ENCODE measurements at regions of chr9 and their contacts with region 1.

Region 1: DNA sequence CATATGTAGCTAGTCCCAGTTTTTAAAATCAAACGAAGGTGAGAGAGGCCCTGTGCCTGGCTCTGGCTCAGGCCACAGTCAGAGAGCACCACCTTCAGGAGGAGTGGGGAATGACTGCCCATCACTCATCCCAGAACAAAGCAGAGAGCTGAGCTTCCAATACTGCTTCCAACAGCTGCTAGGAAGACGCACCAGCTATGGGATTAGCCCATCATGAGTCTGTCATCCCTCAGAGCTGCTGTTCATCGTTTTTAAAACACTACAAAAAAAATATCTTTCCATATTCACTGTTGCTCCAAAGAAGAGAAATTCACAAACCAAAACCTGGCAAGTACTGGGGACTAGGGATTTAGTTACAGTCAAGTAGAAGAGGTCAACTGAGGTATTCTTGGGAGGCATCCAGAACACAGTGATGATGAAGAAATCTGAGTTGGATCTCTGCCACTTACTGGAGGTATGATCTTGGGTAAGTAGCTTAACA is 102.4 kb downstream of the CDK5RAP2 start:
- DNase-seq: peak; percentile 90
- ATAC-seq: peak; percentile 96
- H3K4me3 ChIP-seq: no peak overlapping the region
- H3K27ac ChIP-seq: no peak overlapping the region; the same call in 1 of the 2 replicates
- H3K4me1 ChIP-seq: peaks cover 9% of the 10 kb centered on the region
- H3K27me3 ChIP-seq: no peaks in the 10 kb centered on the region
- CTCF ChIP-seq: peak; percentile 99
- POLR2A ChIP-seq: 0 out of 2 replicates have a peak, but pooled peaks have one; percentile 28
- RAD21 ChIP-seq: peak; percentile 99

Region 2: GRCh38 chr9:119556129-119556875 is 921.3 kb before region 1 on chr9:
- CTCF ChIA-PET with region 1: interaction called, 15 read pairs
- POLR2A ChIA-PET with region 1: no interaction called
- dilution Hi-C with region 1: no loop called
- in situ Hi-C with region 1: loop called (anchors 10 kb)
- intact Hi-C with region 1: loop called (anchors 1 kb)
- DNase-seq: peak; percentile 18
- ATAC-seq: peak; percentile 93
- H3K4me3 ChIP-seq: peak overlapping the region; percentile 40
- H3K27ac ChIP-seq: no peak overlapping the region
- H3K4me1 ChIP-seq: no peaks in the 10 kb centered on the region
- H3K27me3 ChIP-seq: no peaks in the 10 kb centered on the region
- CTCF ChIP-seq: peak; percentile 86
- POLR2A ChIP-seq: no peak
- RAD21 ChIP-seq: peak; percentile 77

Region 3: DNA sequence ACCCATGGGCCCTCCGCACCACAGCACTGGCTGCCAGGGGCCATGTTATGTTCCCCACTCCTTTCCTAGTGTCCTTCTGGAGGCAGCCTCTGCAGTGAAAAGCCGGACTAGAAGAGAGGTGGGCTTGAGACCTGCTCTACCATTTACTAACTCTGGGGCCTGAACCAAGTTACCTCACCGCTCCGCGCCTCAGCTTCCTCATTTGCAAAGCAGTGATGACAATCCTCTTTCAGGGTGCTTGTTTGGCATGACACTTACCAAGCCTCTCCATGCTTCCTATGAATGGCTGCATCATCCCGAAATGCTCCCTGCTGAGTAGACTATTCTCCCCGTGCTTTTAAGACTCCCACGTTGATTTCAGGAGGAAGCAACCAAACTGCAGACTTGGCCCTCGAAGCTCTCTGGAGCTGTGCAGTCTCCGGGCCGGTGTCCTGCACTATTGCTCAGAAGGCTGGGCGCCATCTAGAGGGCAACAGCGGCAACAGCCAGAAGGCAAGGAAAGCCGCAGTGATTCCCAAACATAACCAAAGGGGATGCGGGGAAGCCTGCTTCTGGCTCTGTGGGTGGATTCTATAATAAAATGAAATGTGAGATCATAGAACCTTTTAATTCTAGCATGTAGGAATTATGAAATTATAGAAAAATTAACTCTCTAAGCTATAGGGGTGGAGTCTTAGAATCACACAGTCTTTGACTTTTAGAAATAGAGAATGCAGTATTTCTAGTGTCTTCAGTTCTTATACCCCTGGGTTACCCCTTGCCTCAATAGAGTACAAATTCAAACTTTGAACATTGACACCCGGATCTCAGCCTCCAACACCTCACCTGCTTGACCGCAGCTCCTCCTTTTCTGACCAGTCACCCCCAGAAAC is 508.5 kb before region 1 on chr9:
- CTCF ChIA-PET with region 1: interaction called, 16 read pairs
- POLR2A ChIA-PET with region 1: no interaction called
- dilution Hi-C with region 1: no loop called
- in situ Hi-C with region 1: loop called (anchors 10 kb)
- intact Hi-C with region 1: loop called (anchors 1 kb)
- DNase-seq: peak; percentile 61
- ATAC-seq: peak; percentile 99
- H3K4me3 ChIP-seq: no peak overlapping the region
- H3K27ac ChIP-seq: no peak overlapping the region
- H3K4me1 ChIP-seq: peaks cover 2% of the 10 kb centered on the region
- H3K27me3 ChIP-seq: no peaks in the 10 kb centered on the region
- CTCF ChIP-seq: peak; percentile 94
- POLR2A ChIP-seq: no peak
- RAD21 ChIP-seq: peak; percentile 87

Region 4: DNA sequence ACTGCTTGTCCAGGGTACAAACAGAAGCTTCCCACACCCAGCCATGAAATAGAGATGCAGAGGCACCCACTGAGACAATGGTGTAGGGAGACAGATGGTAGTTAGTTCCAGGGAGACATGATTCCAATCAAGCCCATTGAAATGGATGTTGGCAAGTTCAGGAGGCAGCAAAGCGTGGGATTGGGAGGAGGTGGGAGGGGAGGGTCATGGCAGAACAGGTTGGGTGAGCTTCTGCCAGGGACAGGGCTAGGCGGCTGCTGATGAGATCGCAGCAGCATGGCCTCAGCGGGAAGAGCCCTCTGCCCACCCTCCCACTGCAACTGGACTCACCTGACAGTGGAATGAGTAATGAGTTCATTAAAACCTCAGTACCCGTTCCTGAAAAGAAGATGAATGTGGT is 315.8 kb before region 1 on chr9:
- CTCF ChIA-PET with region 1: no interaction called
- POLR2A ChIA-PET with region 1: no interaction called
- dilution Hi-C with region 1: no loop called
- in situ Hi-C with region 1: no loop called
- intact Hi-C with region 1: no loop called
- DNase-seq: no peak
- ATAC-seq: no peak
- H3K4me3 ChIP-seq: no peak overlapping the region
- H3K27ac ChIP-seq: no peak overlapping the region
- H3K4me1 ChIP-seq: no peaks in the 10 kb centered on the region
- H3K27me3 ChIP-seq: no peaks in the 10 kb centered on the region
- CTCF ChIP-seq: no peak
- POLR2A ChIP-seq: no peak
- RAD21 ChIP-seq: no peak

Region 5: GRCh38 chr9:120343416-120343815 is 134.1 kb before region 1 on chr9:
- CTCF ChIA-PET with region 1: no interaction called
- POLR2A ChIA-PET with region 1: no interaction called
- dilution Hi-C with region 1: no loop called
- in situ Hi-C with region 1: no loop called
- intact Hi-C with region 1: no loop called
- DNase-seq: no peak
- ATAC-seq: no peak
- H3K4me3 ChIP-seq: no peak overlapping the region
- H3K27ac ChIP-seq: no peak overlapping the region
- H3K4me1 ChIP-seq: no peaks in the 10 kb centered on the region
- H3K27me3 ChIP-seq: peaks cover 2% of the 10 kb centered on the region; the same call in 1 of the 2 replicates
- CTCF ChIP-seq: no peak
- POLR2A ChIP-seq: no peak
- RAD21 ChIP-seq: no peak

Region 6: GRCh38 chr9:120377268-120378159 is 100.0 kb before region 1 on chr9:
- CTCF ChIA-PET with region 1: interaction called, 13 read pairs
- POLR2A ChIA-PET with region 1: no interaction called
- dilution Hi-C with region 1: no loop called
- in situ Hi-C with region 1: no loop called
- intact Hi-C with region 1: no loop called
- DNase-seq: peak; percentile 88
- ATAC-seq: peak; percentile 85
- H3K4me3 ChIP-seq: no peak overlapping the region
- H3K27ac ChIP-seq: no peak overlapping the region
- H3K4me1 ChIP-seq: peaks cover 10% of the 10 kb centered on the region
- H3K27me3 ChIP-seq: no peaks in the 10 kb centered on the region
- CTCF ChIP-seq: no peak
- POLR2A ChIP-seq: no peak
- RAD21 ChIP-seq: no peak

Region 7: DNA sequence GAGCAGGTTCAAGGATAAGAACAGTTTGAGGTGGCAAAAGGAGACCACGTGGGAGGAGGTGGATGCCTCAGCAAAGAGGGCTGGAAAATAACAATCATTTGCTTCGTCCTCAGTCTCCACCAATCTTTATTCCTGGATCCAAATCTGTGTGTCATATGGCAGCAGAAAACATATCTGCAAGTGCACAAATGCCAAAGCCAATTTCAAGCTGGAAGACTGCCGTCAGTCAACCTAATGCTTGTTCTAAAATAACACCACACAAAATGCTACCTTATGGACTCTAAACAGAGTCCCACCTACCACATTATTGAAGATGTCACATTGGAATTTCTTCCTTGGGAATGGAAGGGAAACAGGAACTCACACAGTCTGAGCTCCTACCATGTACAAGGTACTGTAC is 26.6 kb before region 1 on chr9:
- CTCF ChIA-PET with region 1: no interaction called
- POLR2A ChIA-PET with region 1: no interaction called
- dilution Hi-C with region 1: no loop called
- in situ Hi-C with region 1: no loop called
- intact Hi-C with region 1: no loop called
- DNase-seq: no peak
- ATAC-seq: no peak
- H3K4me3 ChIP-seq: no peak overlapping the region
- H3K27ac ChIP-seq: no peak overlapping the region
- H3K4me1 ChIP-seq: peaks cover 5% of the 10 kb centered on the region
- H3K27me3 ChIP-seq: no peaks in the 10 kb centered on the region
- CTCF ChIP-seq: no peak
- POLR2A ChIP-seq: no peak
- RAD21 ChIP-seq: no peak

Region 8: DNA sequence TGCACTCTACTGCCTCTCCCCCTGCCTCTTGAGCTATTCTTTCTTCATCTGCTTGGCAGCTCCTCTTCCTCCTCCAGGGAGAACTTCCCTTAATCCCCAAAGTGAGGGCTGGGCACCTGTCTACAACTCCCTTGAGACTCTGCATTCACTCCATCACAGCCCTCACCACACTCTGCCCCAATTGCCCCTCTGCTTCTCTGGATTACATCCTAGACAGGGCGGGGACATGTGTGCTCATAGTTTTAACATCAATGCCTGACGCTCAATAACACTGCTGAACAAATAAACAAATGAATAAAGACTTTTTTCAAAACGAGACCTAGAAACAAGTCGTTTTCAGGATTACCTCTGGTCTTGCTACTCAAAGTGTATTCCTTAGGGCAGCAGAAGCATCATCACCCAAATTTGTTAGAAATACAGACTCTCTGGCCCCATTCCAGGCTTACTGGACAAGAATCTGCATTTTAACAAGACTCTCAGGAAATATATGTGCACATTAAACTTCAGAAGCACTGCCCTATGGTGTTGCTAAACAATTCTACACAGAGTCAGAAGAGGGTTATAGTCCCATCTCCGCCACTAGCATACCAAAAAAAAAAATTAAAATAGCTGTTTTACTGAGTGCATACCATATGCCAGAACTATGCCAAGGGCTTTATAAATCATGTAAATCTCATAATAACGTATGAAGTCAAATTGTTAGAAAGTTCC is 13.2 kb before region 1 on chr9:
- CTCF ChIA-PET with region 1: interaction called, 15 read pairs
- POLR2A ChIA-PET with region 1: no interaction called
- dilution Hi-C with region 1: no loop called
- in situ Hi-C with region 1: no loop called
- intact Hi-C with region 1: no loop called
- DNase-seq: no peak
- ATAC-seq: peak; percentile 57
- H3K4me3 ChIP-seq: no peak overlapping the region
- H3K27ac ChIP-seq: no peak overlapping the region
- H3K4me1 ChIP-seq: no peaks in the 10 kb centered on the region
- H3K27me3 ChIP-seq: no peaks in the 10 kb centered on the region
- CTCF ChIP-seq: no peak
- POLR2A ChIP-seq: no peak
- RAD21 ChIP-seq: no peak

Region 9: GRCh38 chr9:120524863-120525262 is 47.3 kb after region 1 on chr9:
- CTCF ChIA-PET with region 1: no interaction called
- POLR2A ChIA-PET with region 1: no interaction called
- dilution Hi-C with region 1: no loop called
- in situ Hi-C with region 1: no loop called
- intact Hi-C with region 1: no loop called
- DNase-seq: no peak
- ATAC-seq: no peak
- H3K4me3 ChIP-seq: no peak overlapping the region
- H3K27ac ChIP-seq: no peak overlapping the region
- H3K4me1 ChIP-seq: no peaks in the 10 kb centered on the region
- H3K27me3 ChIP-seq: no peaks in the 10 kb centered on the region
- CTCF ChIP-seq: no peak
- POLR2A ChIP-seq: no peak
- RAD21 ChIP-seq: no peak

Measured in IMR-90 (cell line).